ENCODE measurements at regions of chr2 and their contacts with region 1.

Region 1: DNA sequence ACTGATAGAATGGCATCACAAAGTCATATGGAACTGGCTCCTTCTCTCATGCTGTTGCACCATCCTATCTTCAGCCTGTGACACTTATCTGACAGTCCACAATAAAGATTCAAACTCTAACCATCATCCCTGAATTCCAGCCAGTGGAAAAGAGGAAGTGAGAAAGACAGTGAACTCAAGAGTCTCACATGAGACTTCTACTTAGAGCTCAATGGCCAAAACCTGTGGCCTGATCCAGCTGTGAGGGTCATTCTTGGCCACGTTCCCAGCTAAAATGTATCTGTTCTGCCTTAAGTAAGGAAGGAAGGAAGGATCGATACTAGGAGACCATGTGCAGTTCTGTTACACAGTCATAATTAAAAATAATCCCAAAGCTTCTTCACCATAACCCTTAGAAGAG is 73.6 kb downstream of the RND3 start:
- DNase-seq: no peak
- ATAC-seq: no peak
- H3K4me3 ChIP-seq: no peak overlapping the region
- H3K27ac ChIP-seq: no peak overlapping the region
- H3K4me1 ChIP-seq: no peaks in the 10 kb centered on the region
- H3K27me3 ChIP-seq: no peaks in the 10 kb centered on the region
- CTCF ChIP-seq: no peak
- POLR2A ChIP-seq: no peak

Region 2: GRCh38 chr2:149986861-149987260 is 427.0 kb before region 1 on chr2:
- intact Hi-C with region 1: no loop called
- DNase-seq: no peak
- ATAC-seq: no peak
- H3K4me3 ChIP-seq: no peak overlapping the region
- H3K27ac ChIP-seq: no peak overlapping the region
- H3K4me1 ChIP-seq: peaks cover 0 to 24% (median 6%) of the 10 kb centered on the region in 12 donors
- H3K27me3 ChIP-seq: no peaks in the 10 kb centered on the region
- CTCF ChIP-seq: no peak
- POLR2A ChIP-seq: no peak

Region 3: GRCh38 chr2:150432312-150432625 is 18.4 kb after region 1 on chr2:
- intact Hi-C with region 1: loop called in 1 of 10 experiments (anchors 2 kb)
- DNase-seq: no peak
- ATAC-seq: no peak
- H3K4me3 ChIP-seq: no peak overlapping the region
- H3K27ac ChIP-seq: no peak overlapping the region
- H3K4me1 ChIP-seq: no peaks in the 10 kb centered on the region
- H3K27me3 ChIP-seq: no peaks in the 10 kb centered on the region
- CTCF ChIP-seq: no peak
- POLR2A ChIP-seq: no peak

Measured in heart left ventricle (tissue), 16 donors.